Right cardiac atrium (tissue), 5 donors: ENCODE measurements at regions of chr21 and their contacts with region 1.

Region 1: GRCh38 chr21:30426731-30427130 is 1.0 kb upstream of the KRTAP13-3 start:
- DNase-seq: no peak
- ATAC-seq: no peak
- H3K4me3 ChIP-seq: no peak overlapping the region
- H3K27ac ChIP-seq: no peak overlapping the region
- H3K4me1 ChIP-seq: no peaks in the 10 kb centered on the region
- H3K27me3 ChIP-seq: no peaks in the 10 kb centered on the region

Region 2: GRCh38 chr21:29145354-29145782 is 1281.4 kb before region 1 on chr21:
- intact Hi-C with region 1: no loop called
- DNase-seq: no peak
- ATAC-seq: peak; percentile 78 to 87
- H3K4me3 ChIP-seq: no peak overlapping the region
- H3K27ac ChIP-seq: peak overlapping the region; percentile 85
- H3K4me1 ChIP-seq: no peaks in the 10 kb centered on the region
- H3K27me3 ChIP-seq: no peaks in the 10 kb centered on the region

Region 3: DNA sequence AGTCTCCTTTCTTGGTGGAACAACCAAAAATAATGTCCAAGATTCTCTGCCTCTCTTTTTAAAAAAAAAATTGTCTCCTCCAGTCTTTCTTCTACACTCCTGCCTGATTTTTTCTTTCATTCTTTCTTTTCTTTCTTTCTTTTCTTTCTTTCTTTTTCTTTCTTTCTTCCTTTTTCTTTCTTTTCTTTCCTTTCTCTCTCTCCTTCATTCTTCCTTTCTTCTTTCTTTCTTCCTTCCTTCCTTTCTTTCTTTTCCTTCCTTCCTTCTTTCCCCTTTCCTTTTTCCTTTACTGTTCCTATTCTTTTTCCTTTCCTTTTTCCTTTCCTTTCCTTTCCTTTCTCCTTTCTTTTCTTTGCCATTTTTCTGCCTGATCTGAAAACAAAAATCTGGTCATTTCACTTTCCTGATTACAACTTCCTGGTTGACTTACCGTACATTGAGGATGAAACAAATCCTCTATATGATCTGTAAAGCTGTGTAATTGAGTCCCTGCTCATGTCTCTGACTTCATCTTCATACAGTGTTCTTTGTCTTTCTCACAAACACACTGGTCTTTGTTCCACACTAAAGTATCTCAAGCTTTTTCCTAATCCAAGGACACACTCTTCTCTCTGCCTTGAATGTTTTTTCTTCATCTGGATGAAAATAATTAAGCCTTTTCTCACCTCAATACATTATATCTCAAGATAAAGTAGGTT is 72.3 kb before region 1 on chr21:
- intact Hi-C with region 1: loop called in 2 of 4 experiments (anchors 5 to 10 kb)
- DNase-seq: no peak
- ATAC-seq: no peak
- H3K4me3 ChIP-seq: no peak overlapping the region
- H3K27ac ChIP-seq: no peak overlapping the region
- H3K4me1 ChIP-seq: no peaks in the 10 kb centered on the region
- H3K27me3 ChIP-seq: no peaks in the 10 kb centered on the region